Activated CD4-positive, alpha-beta T cell treated with anti-CD3 and anti-CD28 coated beads, Interleukin-2, amount 10 ng/mL, durations not matched to agents 7 days and 5 days (primary cell): ENCODE measurements at regions of chr22 and their contacts with region 1.

Region 1: GRCh38 chr22:46737976-46738646 is at the start of gene CERK:
- DNase-seq: peak; percentile 72
- H3K4me3 Mint-ChIP-seq: peak within 1 kb of the TSS; percentile 100
- H3K27ac Mint-ChIP-seq: peak within 1 kb of the TSS; percentile 97
- H3K4me1 Mint-ChIP-seq: peaks cover 41% of the 10 kb centered on the region
- H3K27me3 Mint-ChIP-seq: no peaks in the 10 kb centered on the region
- total RNA-seq, gene CERK: 41.8 to 47.1 TPM

Region 2: GRCh38 chr22:46638601-46639431 is 99.3 kb before region 1 on chr22:
- CTCF ChIA-PET with region 1: no interaction called
- POLR2A ChIA-PET with region 1: no interaction called
- DNase-seq: no peak
- H3K4me3 Mint-ChIP-seq: no peak overlapping the region
- H3K27ac Mint-ChIP-seq: no peak overlapping the region
- H3K4me1 Mint-ChIP-seq: no peaks in the 10 kb centered on the region
- H3K27me3 Mint-ChIP-seq: no peaks in the 10 kb centered on the region

Region 3: GRCh38 chr22:46674367-46674781 is 63.7 kb before region 1 on chr22:
- CTCF ChIA-PET with region 1: no interaction called
- POLR2A ChIA-PET with region 1: interaction called, 11 read pairs
- DNase-seq: peak; percentile 92
- H3K4me3 Mint-ChIP-seq: peak overlapping the region; percentile 80
- H3K27ac Mint-ChIP-seq: peak overlapping the region; percentile 96
- H3K4me1 Mint-ChIP-seq: peaks cover 27% of the 10 kb centered on the region
- H3K27me3 Mint-ChIP-seq: no peaks in the 10 kb centered on the region

Region 4: GRCh38 chr22:46714550-46714949 is 23.6 kb before region 1 on chr22:
- CTCF ChIA-PET with region 1: no interaction called
- POLR2A ChIA-PET with region 1: no interaction called
- DNase-seq: no peak
- H3K4me3 Mint-ChIP-seq: no peak overlapping the region
- H3K27ac Mint-ChIP-seq: no peak overlapping the region
- H3K4me1 Mint-ChIP-seq: peaks cover 4% of the 10 kb centered on the region
- H3K27me3 Mint-ChIP-seq: no peaks in the 10 kb centered on the region

Region 5: DNA sequence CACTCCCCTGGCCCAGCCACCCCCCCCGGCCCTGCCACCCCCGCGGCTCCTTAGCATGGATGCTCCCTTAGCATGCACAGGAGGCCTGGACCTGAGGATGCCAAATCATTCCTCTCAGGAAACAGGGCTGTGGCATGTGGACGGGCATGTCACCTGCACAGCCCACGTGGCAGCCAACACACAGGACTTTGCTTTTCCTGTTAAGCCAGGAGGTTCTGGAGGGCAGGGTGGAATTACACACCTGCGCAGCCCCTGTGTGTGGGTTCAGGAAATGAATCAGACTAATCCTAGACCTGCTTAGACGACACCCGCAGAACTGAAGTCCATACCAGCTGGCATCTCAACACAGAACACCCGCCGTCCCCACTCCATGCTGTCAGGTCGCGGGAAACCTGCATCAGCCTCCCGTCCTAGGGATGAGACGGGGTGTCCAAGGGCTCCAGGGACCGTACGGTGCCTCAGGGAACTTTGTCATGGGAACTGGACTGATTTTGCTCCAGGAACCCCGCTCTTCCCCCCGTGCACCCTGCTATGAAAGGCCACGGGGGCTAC is 10.2 kb before region 1 on chr22:
- CTCF ChIA-PET with region 1: no interaction called
- POLR2A ChIA-PET with region 1: no interaction called
- DNase-seq: no peak
- H3K4me3 Mint-ChIP-seq: no peak overlapping the region
- H3K27ac Mint-ChIP-seq: no peak overlapping the region
- H3K4me1 Mint-ChIP-seq: peaks cover 21% of the 10 kb centered on the region
- H3K27me3 Mint-ChIP-seq: no peaks in the 10 kb centered on the region

Region 6: GRCh38 chr22:46845296-46846149 is 107.4 kb after region 1 on chr22:
- CTCF ChIA-PET with region 1: no interaction called
- POLR2A ChIA-PET with region 1: no interaction called
- DNase-seq: no peak
- H3K4me3 Mint-ChIP-seq: no peak overlapping the region
- H3K27ac Mint-ChIP-seq: no peak overlapping the region
- H3K4me1 Mint-ChIP-seq: peaks cover 17% of the 10 kb centered on the region
- H3K27me3 Mint-ChIP-seq: no peaks in the 10 kb centered on the region